GM13977 (cell line): ENCODE measurements at regions of chr4 and their contacts with region 1.

Region 1: DNA sequence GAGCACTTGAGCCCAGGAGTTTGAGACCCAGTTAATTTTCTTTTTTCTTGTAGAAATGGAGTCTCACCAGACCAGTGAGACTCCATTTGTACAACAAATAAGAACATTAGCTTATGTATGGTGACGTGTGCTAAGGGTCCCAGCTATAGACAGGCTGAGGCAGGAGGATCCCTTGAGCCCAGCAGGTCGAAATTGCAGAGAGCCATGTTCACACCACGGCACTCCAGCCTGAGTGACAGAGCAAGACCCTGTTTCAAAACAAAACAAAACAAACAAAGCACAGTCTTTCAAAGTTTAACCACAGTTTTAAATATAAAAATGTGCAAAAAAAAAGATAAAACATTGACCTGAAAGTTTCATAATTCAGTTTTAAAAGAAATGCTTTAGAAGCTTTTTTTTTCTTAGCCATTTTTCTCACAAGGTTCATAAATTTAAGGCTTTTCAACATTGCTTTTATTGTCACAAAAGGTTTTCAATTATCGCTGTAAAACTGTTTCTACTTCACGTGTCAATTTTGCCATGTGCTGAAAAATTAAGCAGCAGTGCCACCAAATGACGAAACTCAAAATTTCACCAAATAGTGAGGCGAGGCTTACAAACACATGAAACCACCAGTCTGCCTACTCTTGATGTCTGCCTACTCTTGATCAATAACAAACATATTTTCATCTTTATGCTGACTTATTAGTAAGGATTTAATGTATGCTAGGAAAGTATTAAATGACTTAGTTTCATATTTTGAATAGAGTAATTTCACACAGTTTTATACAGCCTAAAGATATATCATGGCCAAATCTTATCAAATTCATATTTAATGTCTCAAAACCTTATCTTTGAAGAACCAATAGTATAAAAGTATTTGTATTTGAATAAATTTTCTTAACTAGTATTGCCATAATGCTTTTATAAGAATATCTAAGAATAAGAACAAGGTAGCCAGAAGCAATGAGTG is 126.3 kb downstream of the NEK1 start:
- DNase-seq: peak; percentile 47
- CTCF ChIP-seq: peak; percentile 72

Region 2: DNA sequence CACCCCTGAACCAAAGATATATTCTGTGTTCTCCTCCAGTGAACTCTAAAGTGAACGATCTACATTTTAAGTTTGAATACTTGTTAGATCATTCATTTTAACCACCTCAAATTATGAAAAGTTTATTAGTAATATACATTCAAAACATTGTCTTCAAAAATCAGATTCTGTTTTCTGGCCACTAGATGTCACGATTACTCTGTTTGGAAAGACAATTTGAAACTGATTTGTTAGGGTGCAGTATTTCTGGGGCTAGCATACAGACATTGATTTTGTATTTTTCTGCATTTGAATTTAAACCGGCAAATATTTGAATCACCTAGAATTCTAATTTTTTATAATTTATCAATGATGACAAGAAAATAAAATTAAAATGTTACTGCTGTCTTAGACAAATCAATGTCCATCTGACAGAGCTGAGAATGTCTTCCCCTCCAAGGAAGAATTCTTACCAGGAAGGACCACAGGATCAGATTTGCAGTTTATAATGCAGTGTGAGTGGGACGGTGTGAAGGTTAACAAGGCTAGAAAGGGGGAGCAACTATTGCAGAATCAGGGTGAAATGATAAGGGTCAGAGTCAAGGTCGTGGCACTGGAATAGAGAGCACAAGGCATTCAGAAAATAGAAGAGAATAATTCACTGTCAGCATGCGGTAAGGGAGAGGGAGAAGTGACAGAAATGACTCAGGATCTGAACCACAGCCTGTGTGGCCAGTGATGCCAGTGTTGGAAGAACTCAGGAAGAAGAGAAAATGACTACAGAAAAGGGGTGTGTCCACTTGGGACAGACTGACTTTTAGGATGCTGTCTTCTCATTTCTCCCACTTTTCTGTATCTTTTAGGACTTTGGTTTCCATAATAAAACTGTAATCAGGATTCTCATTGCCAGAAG is 1302.1 kb before region 1 on chr4:
- in situ Hi-C with region 1: loop called (anchors 25 kb)
- DNase-seq: peak; percentile 56
- CTCF ChIP-seq: peak; percentile 59

Region 3: GRCh38 chr4:168803732-168804131 is 682.3 kb before region 1 on chr4:
- in situ Hi-C with region 1: no loop called
- DNase-seq: no peak
- CTCF ChIP-seq: no peak

Region 4: DNA sequence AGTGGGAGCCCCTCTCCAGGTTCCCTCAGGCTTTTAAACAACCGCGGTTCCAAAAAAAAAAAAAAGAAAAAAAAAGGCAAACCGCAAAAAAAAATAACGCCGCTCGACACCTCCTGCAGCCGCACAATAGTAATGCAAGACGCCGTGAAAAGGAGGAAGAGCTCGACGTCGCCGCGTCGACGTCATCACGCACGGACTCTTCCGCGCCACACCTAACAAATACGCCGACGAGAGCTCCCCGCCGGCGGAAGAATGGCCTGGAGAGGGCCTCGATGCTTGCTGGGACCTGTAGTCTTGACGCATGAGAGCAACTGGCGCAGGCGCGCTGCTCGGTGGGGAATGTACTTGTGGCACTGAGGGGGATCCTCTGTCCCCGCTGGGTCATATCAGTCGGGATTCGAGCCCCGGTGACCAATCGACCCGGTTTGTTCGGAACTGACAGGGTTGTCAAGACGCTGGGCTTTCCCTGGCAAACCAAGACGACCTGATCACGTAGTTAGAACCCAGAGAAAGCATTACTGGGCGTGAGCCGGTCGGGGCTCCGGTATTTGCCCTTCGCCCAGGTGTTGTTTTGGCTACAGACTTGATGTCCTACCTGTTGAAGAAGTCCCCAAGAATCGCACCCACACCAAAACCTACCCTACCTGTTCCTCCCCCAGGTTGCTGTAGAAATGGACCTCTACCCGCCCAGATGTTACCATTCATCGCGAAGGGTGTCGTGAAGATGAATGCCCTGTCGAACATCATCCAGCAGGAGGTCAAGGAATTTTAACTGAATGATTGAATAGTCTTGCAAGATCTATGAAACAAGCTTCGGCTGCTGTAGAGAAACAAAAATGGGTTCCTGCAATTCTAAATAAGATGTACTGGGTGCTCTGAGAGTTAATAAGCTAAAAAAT is 475.7 kb before region 1 on chr4 and contains the start of gene CBR4:
- in situ Hi-C with region 1: loop called (anchors 10 kb)
- DNase-seq: peak; percentile 86
- CTCF ChIP-seq: no peak

Region 5: GRCh38 chr4:169293343-169294176 is 192.5 kb before region 1 on chr4:
- in situ Hi-C with region 1: loop called (anchors 25 kb)
- DNase-seq: peak; percentile 50
- CTCF ChIP-seq: no peak